OCI-LY7 (cell line): ENCODE measurements at regions of chr1 and their contacts with region 1.

Region 1: DNA sequence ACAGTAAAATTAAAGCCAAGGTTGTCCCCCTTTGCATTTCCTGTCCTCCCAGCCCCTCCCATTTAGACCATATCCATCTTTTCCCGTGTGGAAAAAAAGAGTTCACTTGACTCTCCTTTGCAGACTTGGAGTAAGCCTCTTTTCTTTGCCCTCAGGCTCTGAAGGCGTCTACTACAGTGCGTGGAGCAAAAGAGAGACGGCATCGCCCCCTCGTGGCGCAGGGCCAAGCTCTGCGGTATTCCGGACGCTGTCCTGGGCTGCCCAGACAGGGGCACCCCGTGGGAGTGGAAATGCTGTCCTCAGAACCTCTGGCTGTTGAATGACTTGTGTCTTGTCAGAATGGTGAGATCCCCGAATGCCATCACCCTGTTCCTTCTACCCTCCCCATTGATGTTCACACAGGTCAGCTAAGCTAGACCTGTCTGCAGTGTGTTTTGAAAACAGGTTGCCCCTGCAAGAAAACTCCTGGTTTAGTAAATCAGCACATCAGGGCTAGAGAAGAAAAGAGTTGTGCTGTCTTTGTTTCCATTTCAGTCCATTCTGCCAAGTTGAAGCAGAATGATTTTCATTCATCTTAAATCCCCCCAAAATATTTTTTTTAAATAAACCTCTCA is 12.3 kb upstream of the GJA8 start:
- DNase-seq: peak; percentile 64
- H3K4me3 ChIP-seq: no peak overlapping the region
- H3K27ac ChIP-seq: no peak overlapping the region
- H3K4me1 ChIP-seq: no peaks in the 10 kb centered on the region
- CTCF ChIP-seq: peak; percentile 87

Region 2: DNA sequence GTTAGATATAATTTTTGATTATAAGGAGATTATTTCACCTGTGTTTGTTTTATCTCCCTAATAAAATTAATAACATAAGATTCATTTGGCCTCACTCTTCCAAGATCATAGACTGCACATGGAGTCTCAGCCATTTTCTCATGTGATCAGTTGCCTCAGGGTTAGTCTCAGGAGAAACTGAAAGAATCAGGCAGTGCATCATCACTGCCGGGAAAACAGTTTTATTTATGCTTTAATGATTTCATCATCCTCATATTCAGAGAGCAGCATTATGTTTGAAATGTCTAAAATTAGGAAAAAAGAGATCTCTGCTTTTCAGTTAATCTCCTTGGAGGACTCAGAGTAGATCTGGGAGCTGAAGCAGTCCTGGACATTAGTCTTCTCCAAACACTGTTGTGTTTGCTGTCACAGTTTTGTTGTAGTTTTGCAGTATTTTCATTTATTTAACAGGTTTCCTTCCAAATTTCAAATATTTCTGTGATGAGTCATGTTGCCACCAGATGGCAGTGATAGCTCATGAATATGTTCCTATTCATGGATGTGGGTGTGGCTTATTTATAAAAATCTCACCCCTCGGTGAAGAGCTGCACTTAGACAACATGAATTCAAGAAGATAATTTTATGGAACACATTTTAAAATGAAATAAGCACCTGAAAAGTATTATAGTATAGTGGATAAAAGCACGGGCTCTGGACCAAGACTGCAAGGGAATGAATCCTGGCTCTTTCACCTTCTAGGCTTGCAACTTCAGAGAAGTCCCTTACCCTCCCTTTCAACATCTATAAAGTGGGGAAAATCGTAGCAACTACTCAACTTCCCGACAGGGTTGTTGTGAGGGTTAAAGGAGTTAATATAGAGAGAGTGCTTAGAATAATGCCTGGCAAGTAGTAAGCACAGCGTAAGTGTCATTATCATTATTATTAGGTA is 616.6 kb before region 1 on chr1:
- CTCF ChIA-PET with region 1: no interaction called
- POLR2A ChIA-PET with region 1: no interaction called
- intact Hi-C with region 1: loop called (anchors 5 kb)
- DNase-seq: peak; percentile 69
- H3K4me3 ChIP-seq: no peak overlapping the region
- H3K27ac ChIP-seq: no peak overlapping the region
- H3K4me1 ChIP-seq: no peaks in the 10 kb centered on the region
- CTCF ChIP-seq: peak; percentile 90

Region 3: DNA sequence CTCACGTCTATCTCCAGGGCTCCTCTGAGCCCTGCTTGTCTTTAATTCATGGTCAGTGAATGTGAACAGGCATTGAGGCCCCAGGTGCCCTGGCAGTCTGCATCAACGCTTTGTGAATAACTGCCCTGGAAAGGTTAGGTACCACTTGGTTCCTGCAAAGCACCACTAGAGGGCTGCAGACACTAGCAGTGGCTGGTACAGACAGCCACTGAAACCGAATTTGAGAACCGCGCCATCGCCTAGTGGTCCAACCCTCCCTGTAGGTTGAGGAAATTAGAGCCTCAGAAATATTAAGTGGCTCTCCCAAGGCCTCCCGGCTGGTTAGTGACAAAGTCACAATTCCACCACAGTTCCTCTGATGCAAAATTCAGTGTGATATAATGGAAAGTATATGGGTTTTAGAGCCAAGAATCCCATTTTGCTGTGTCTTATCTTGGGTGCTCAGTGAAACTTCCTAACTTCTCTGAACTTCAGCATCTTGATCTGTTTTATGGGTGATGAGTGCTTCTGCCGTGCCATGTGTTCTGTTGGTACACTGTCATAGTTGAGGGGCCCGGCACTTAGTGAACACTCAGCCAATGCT is 395.2 kb before region 1 on chr1:
- CTCF ChIA-PET with region 1: no interaction called
- POLR2A ChIA-PET with region 1: no interaction called
- intact Hi-C with region 1: loop called (anchors 2 kb)
- DNase-seq: peak; percentile 85
- H3K4me3 ChIP-seq: no peak overlapping the region
- H3K27ac ChIP-seq: no peak overlapping the region
- H3K4me1 ChIP-seq: no peaks in the 10 kb centered on the region
- CTCF ChIP-seq: peak; percentile 98

Region 4: DNA sequence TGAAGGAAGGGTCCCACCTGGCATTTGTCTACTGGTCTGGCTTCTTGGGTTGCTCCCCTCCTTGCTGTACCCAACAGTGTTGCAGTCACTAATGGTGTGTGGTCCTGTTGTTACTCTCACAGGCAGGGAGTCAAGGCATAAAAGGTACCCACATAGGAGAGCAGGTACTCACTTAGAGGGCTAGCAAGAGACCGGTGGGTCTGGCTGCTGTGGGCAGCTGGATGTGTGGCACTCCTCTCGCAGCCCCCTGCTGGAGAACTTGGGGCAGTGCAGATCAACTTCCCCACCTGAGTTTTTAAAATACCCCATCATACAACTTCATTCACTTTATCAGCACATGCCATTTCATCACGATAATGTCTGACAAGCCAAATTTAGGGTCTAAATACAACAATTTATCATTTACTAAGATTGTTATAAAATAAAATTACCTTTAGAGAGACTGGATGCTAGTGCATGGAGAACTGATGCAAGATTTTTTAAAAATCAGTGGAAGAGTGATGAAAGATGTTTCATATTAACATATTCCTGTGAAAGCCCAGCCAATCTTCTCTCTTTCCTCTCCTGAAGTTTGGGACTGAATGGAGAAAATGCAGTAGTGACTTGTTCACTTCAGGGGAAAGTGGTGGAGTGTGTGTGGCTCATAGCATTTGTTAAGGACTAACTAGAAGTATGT is 262.7 kb before region 1 on chr1:
- CTCF ChIA-PET with region 1: no interaction called
- POLR2A ChIA-PET with region 1: no interaction called
- intact Hi-C with region 1: loop called (anchors 5 kb)
- DNase-seq: peak; percentile 60
- H3K4me3 ChIP-seq: no peak overlapping the region
- H3K27ac ChIP-seq: no peak overlapping the region
- H3K4me1 ChIP-seq: peaks cover 9% of the 10 kb centered on the region
- CTCF ChIP-seq: peak; percentile 96

Region 5: GRCh38 chr1:147640553-147641165 is 249.6 kb before region 1 on chr1:
- CTCF ChIA-PET with region 1: no interaction called
- POLR2A ChIA-PET with region 1: no interaction called
- intact Hi-C with region 1: loop called (anchors 2 kb)
- DNase-seq: peak; percentile 81
- H3K4me3 ChIP-seq: no peak overlapping the region
- H3K27ac ChIP-seq: no peak overlapping the region
- H3K4me1 ChIP-seq: no peaks in the 10 kb centered on the region
- CTCF ChIP-seq: peak; percentile 85

Region 6: DNA sequence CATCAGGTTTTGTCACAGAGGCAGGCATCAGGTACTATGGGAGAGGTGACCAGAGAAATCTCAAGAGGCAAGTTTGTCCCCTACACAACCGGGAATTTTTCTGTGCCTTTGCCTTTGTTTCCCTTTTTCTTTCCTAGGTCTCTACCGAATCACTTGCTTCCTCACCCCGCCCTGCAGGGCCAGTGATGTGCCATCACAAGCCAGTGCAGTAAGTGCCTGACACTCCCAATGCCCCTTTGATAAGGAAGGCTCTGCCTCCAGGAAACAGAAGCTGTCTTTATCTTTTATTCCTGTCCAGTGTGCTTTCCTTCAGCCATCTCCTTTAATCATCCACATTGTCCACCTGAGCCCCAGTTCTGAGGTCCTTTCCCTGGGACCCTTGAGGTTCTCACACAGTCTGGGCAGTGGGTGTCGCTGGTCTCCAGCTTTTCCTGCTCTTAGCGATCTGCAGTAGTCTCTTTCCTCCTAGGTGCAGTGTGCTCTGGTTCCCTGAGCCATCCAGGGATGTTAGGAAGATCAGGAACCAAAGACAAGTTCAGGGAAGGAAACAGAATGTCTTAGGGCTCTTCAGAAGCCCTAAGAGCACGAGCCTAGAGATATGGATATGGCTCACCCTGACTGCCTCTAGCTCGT is 166.5 kb before region 1 on chr1:
- CTCF ChIA-PET with region 1: interaction called, 3 read pairs
- POLR2A ChIA-PET with region 1: interaction called, 3 read pairs
- intact Hi-C with region 1: loop called (anchors 1 kb)
- DNase-seq: peak; percentile 48
- H3K4me3 ChIP-seq: no peak overlapping the region
- H3K27ac ChIP-seq: no peak overlapping the region
- H3K4me1 ChIP-seq: no peaks in the 10 kb centered on the region
- CTCF ChIP-seq: peak; percentile 76

Region 7: DNA sequence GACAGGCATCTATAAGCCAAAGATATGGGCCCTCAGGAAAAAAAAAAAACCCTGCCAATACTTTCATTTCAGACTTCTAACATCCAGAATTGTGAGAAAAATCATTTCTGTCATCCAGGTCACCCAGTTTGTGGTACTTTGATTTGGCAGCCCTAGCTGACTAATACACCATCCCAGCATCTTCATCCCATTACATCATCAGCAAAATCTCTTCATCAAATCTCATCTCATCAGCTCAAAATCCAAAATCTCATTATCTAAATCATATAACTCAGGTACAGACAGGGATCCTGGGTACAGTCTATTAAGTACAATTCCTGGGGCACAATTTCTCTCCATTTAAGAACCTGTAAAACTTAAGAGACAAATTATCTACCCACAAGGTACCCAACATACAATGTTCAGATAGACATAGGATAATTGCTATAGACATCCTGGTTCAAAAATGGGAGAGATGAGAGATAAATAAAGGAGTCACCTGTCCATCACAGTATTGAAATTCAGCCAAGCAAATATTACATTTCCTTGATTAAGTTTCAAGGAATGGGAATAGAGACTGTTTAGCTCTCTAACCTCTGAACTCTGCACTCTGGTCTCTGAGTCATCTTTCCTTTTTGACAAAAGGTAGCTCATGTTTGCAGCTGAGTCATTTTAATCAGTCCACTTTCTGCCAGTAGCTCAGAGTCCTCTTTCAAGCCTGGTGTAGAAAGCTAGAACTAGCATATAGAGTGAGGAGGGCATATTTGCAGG is 39.4 kb before region 1 on chr1:
- CTCF ChIA-PET with region 1: no interaction called
- POLR2A ChIA-PET with region 1: no interaction called
- intact Hi-C with region 1: no loop called
- DNase-seq: no peak
- H3K4me3 ChIP-seq: no peak overlapping the region
- H3K27ac ChIP-seq: no peak overlapping the region
- H3K4me1 ChIP-seq: no peaks in the 10 kb centered on the region
- CTCF ChIP-seq: no peak